ENCODE measurements at regions of chr1 and their contacts with region 1.

Region 1: DNA sequence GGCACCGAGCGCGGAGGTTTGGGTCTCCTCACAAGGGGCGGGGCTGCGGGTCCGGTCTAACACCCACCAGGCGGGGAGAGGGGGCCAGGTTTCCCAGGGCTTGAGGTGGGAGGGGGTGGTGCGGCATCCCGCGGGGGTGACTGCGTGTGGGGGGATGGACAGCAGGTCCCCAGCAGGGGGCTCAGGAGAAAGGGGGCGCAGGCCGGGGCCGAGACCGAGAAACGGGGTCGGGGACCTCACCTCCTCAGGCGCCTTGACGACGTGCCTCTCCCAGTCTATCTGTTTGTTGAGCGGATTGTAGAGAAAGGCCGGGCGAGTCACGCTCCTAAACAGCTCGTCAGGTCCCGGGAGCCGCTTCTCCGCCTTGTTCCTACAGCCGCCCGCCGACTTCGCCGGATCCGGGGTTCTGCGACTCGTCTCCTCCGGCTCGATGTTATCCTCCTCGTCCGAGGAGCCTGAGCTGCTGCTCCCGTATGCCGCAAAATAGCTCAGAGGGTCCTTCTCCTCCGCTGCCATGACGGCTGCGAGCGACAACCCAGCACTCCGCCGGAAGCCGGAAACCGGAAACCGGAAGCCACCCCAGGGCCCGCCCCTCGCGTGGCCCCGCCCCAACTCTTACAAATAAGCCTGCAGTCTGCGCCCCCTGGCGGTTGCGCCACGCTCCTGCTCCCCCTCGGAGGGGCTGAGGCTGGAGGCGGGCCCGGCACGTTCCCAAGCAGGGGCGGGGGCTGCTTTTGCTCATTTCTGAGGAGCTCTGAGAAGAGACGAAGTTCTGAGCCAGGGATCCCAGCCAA is at the start of gene C1orf52:
- DNase-seq: peak; percentile 99
- ATAC-seq: peak; percentile 97
- H3K4me3 Mint-ChIP-seq: peak within 1 kb of the TSS; percentile 95
- H3K27ac Mint-ChIP-seq: peak within 1 kb of the TSS; percentile 94
- H3K4me1 Mint-ChIP-seq: peaks cover 39% of the 10 kb centered on the region
- H3K27me3 Mint-ChIP-seq: no peaks in the 10 kb centered on the region
- total RNA-seq, gene C1orf52: 23.5 to 24.6 TPM

Region 2: GRCh38 chr1:84506002-84506728 is 753.1 kb before region 1 on chr1 and contains the starts of genes GNG5 and SPATA1:
- CTCF ChIA-PET with region 1: no interaction called
- POLR2A ChIA-PET with region 1: no interaction called
- intact Hi-C with region 1: loop called in 1 of 2 experiments (anchors 1 kb)
- DNase-seq: peak; percentile 99
- ATAC-seq: peak; percentile 91
- H3K4me3 Mint-ChIP-seq: peak within 1 kb of the TSS; percentile 96
- H3K27ac Mint-ChIP-seq: peak within 1 kb of the TSS; percentile 100
- H3K4me1 Mint-ChIP-seq: peaks cover 29% of the 10 kb centered on the region
- H3K27me3 Mint-ChIP-seq: no peaks in the 10 kb centered on the region
- total RNA-seq, gene GNG5: 124 to 159 TPM
- total RNA-seq, gene SPATA1: 0.61 to 1.4 TPM

Region 3: DNA sequence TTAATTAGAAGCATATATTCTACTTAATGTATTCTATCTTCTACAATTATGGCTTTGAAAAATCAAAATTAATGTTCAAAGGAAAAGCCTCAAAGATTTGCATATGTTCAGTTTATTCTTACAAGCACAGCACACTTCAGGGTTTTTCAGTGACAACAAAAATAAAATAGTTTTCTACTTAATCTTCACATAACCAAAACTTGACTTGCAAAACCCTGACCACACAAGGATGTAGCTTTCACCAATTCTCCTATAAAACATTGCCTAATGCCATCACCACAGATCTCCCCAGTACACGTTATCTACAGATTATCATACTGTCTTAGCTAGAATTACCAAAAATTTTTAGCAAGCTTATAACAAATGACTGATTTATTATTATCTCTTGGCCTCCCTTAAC is 389.6 kb before region 1 on chr1:
- CTCF ChIA-PET with region 1: no interaction called
- POLR2A ChIA-PET with region 1: no interaction called
- intact Hi-C with region 1: no loop called
- DNase-seq: no peak
- ATAC-seq: no peak
- H3K4me3 Mint-ChIP-seq: no peak overlapping the region
- H3K27ac Mint-ChIP-seq: no peak overlapping the region
- H3K4me1 Mint-ChIP-seq: no peaks in the 10 kb centered on the region
- H3K27me3 Mint-ChIP-seq: peaks cover 11% of the 10 kb centered on the region

Region 4: DNA sequence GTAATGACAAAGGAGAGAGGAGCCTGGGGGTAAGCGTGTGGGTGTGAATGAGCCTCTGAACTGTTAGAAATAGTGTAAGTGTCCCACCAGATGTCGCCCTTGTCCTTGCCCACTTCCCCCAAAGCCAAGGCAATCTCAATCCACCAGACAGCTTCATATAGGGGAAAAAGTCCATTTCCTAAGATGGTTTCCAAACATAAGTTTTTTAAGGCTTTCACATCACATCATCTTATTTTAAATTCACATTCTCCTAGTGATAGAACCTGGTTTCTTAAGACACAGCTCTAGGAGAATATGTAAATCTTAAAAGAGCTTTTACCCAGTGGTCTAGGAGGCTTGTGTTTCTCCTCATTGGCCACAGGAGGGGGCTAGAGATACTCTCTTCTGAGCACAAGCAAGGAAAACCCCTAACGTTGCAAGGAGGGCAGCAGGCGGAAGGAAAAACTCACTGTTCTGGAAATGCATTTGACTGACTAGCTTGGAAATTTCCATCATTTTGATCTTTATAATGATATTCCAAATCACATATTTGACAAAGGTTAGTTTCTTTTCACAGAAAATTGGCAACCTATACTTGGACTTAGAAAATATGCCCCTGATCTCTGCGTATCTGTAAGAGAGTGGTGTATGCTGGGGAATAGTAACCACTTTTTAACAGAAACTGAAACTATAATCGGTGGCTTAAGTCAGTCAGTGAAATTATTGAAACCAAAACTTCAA is 314.4 kb before region 1 on chr1:
- CTCF ChIA-PET with region 1: interaction called, 52 read pairs
- POLR2A ChIA-PET with region 1: interaction called, 5 read pairs
- intact Hi-C with region 1: loop called (anchors 1 kb)
- DNase-seq: peak; percentile 75
- ATAC-seq: peak; percentile 92
- H3K4me3 Mint-ChIP-seq: peak overlapping the region; percentile 65
- H3K27ac Mint-ChIP-seq: peak overlapping the region; percentile 89
- H3K4me1 Mint-ChIP-seq: peaks cover 26% of the 10 kb centered on the region
- H3K27me3 Mint-ChIP-seq: no peaks in the 10 kb centered on the region

Region 5: DNA sequence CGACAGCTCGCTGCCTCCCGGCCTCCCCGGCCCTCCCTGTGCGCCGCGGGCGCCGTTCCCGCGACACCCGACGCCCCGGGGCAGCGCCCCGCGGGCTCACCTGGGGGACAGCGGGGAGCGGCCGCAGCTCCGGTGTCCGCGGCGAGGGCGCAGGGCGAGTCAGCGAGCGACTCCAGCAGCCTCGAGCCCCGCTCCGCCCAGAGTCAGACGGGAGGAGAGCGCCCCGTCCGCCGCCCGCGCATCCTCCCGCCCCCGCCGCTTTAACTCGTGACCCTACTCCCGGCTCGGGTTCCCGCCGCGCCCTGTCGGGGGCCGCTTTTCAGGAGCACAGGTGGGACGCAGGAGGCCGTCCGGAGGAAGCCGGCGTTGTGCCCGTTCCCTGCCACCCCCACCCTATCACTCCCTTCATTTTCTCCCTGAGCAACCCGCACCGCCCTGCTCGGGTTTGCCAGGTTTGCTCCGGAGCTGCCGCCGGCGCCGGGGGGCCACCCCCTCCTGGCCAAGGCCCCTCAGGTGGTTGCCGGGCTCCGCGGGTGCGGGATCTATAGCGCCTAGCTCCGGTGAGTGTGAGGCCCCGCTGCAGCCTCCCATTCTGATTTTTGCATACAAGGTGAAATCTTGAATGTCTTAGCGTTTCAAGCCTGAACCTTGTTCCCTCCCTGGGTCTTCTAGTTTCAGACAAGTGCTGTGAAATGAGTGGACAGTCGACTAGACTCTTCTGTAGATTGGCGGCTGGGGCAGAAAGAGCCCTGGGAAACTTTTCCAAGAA is 210.8 kb before region 1 on chr1 and contains the start of gene MCOLN3:
- CTCF ChIA-PET with region 1: interaction called, 3 read pairs
- POLR2A ChIA-PET with region 1: no interaction called
- intact Hi-C with region 1: loop called in 1 of 2 experiments (anchors 5 kb)
- DNase-seq: peak; percentile 62
- ATAC-seq: peak; percentile 60
- H3K4me3 Mint-ChIP-seq: peak within 1 kb of the TSS; percentile 62
- H3K27ac Mint-ChIP-seq: no peak within 1 kb of the TSS
- H3K4me1 Mint-ChIP-seq: peaks cover 21% of the 10 kb centered on the region
- H3K27me3 Mint-ChIP-seq: peaks cover 48% of the 10 kb centered on the region
- total RNA-seq, gene MCOLN3: 0.16 to 0.23 TPM

Region 6: DNA sequence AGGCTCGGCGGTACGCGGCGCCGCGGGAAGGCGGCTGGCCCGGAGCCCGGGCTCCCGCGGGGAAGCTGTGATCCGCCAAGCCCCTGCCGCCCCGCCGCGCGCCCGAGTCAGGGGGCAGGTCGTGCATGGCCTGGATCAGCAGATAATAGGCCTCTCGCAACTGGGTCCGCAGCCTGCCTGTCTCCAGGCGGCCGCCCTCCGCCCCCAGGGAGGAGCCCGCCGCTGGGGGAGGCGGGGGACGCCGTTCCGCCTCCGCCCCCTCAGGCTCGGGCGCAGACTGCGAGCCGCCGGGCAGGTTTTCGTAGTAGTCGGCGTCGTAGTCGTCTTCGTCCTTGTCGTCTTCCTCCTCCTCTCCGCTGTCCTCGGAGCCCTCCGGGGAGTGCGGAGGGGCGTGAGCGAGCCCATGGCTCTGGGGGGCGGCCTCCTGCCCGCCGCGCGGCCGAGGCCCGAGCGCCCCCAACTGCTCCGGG is 58.4 kb before region 1 on chr1 and contains the start of gene SYDE2:
- CTCF ChIA-PET with region 1: no interaction called
- POLR2A ChIA-PET with region 1: no interaction called
- intact Hi-C with region 1: loop called (anchors 1 to 2 kb)
- DNase-seq: peak; percentile 79
- ATAC-seq: peak; percentile 76
- H3K4me3 Mint-ChIP-seq: peak within 1 kb of the TSS; percentile 90
- H3K27ac Mint-ChIP-seq: peak within 1 kb of the TSS; percentile 88
- H3K4me1 Mint-ChIP-seq: peaks cover 25% of the 10 kb centered on the region
- H3K27me3 Mint-ChIP-seq: peaks cover 12% of the 10 kb centered on the region
- total RNA-seq, gene SYDE2: 2.9 to 3.3 TPM

Region 7: GRCh38 chr1:85216697-85217096 is 42.6 kb before region 1 on chr1:
- CTCF ChIA-PET with region 1: no interaction called
- POLR2A ChIA-PET with region 1: no interaction called
- intact Hi-C with region 1: no loop called
- DNase-seq: no peak
- ATAC-seq: no peak
- H3K4me3 Mint-ChIP-seq: no peak overlapping the region
- H3K27ac Mint-ChIP-seq: no peak overlapping the region
- H3K4me1 Mint-ChIP-seq: no peaks in the 10 kb centered on the region
- H3K27me3 Mint-ChIP-seq: peaks cover 24% of the 10 kb centered on the region

Region 8: DNA sequence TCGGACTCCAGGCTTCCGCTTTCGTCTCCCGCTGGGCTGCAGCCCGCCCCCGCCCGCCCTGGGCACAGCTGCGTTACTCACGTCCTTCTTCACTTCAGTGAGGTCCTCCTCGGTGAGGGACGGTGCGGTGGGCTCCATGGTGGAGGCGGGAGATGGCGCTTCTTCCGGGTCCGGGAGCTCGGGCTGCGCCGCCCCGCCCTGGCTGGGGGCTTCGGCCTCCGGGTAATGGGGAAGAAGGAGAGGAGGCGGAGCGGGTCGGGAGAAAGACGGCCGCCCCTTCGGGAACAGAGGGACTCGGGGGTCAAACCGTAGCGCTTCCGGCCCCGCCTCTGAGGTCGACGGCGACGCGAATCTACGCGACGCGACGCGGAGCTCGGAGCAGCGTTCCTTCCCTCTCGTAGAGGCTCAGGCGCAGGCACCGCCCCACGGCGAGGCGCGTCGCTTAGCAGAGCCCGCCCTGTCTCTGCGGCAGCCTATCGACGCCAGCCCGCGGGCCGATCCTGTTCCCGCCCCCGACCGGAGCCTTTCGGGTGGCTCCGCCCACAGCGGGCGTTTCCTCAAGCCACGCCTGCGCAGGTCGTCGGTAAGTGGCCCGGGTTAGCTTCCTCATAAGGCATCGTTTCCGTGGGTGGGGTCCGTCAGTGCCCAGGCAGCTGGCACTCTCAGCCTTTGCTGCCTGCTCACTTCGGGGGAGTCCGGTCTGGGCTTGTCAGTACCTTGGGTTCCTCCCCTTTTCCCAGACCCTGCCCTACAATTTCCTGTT is 17.1 kb after region 1 on chr1 and contains the start of gene BCL10:
- CTCF ChIA-PET with region 1: interaction called, 36 read pairs
- POLR2A ChIA-PET with region 1: interaction called, 8 read pairs
- intact Hi-C with region 1: loop called (anchors 1 kb)
- DNase-seq: peak; percentile 99
- ATAC-seq: peak; percentile 97
- H3K4me3 Mint-ChIP-seq: peak within 1 kb of the TSS; percentile 84
- H3K27ac Mint-ChIP-seq: peak within 1 kb of the TSS; percentile 94
- H3K4me1 Mint-ChIP-seq: peaks cover 52% of the 10 kb centered on the region
- H3K27me3 Mint-ChIP-seq: peaks cover 4% of the 10 kb centered on the region
- total RNA-seq, gene BCL10: 28.3 to 28.8 TPM

Region 9: DNA sequence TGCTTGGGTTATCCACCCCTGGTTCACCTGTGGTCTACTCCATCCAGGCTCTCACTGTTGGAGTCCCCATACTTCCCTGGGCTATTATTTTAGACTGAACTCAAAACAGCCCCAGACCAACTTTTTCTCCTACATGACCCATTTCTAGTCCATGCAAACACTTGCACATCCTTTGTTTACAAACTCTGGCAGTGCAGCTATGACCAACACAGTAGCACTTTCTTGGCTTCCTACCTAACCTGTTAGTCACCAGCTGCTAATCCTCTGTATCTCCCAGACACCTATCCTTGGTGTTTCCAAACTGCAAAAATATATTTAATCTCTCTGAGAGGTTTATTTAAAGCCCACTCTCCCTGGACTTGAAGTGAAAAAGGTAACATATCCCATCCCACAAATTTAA is 114.8 kb after region 1 on chr1:
- CTCF ChIA-PET with region 1: no interaction called
- POLR2A ChIA-PET with region 1: no interaction called
- intact Hi-C with region 1: no loop called
- DNase-seq: no peak
- ATAC-seq: no peak
- H3K4me3 Mint-ChIP-seq: no peak overlapping the region
- H3K27ac Mint-ChIP-seq: no peak overlapping the region
- H3K4me1 Mint-ChIP-seq: no peaks in the 10 kb centered on the region
- H3K27me3 Mint-ChIP-seq: peaks cover 10% of the 10 kb centered on the region

Measured in activated CD4-positive, alpha-beta T cell treated with anti-CD3 and anti-CD28 coated beads for 36 hours (primary cell).